ENCODE measurements at regions of chr17 and their contacts with region 1.

Region 1: GRCh38 chr17:48528153-48528935 is 2.5 kb downstream of the HOXB1 start:
- DNase-seq: no peak
- ATAC-seq: no peak
- H3K4me3 ChIP-seq: no peak overlapping the region
- H3K4me3 Mint-ChIP-seq: no peak overlapping the region
- H3K27ac ChIP-seq: no peak overlapping the region
- H3K27ac Mint-ChIP-seq: no peak overlapping the region
- H3K4me1 ChIP-seq: peaks cover 7% of the 10 kb centered on the region
- H3K4me1 Mint-ChIP-seq: peaks cover 6 to 12% of the 10 kb centered on the region in 2 donors
- H3K27me3 ChIP-seq: peaks cover 12% of the 10 kb centered on the region
- H3K27me3 Mint-ChIP-seq: peaks cover 25 to 40% of the 10 kb centered on the region in 2 donors
- CTCF ChIP-seq: no peak

Region 2: DNA sequence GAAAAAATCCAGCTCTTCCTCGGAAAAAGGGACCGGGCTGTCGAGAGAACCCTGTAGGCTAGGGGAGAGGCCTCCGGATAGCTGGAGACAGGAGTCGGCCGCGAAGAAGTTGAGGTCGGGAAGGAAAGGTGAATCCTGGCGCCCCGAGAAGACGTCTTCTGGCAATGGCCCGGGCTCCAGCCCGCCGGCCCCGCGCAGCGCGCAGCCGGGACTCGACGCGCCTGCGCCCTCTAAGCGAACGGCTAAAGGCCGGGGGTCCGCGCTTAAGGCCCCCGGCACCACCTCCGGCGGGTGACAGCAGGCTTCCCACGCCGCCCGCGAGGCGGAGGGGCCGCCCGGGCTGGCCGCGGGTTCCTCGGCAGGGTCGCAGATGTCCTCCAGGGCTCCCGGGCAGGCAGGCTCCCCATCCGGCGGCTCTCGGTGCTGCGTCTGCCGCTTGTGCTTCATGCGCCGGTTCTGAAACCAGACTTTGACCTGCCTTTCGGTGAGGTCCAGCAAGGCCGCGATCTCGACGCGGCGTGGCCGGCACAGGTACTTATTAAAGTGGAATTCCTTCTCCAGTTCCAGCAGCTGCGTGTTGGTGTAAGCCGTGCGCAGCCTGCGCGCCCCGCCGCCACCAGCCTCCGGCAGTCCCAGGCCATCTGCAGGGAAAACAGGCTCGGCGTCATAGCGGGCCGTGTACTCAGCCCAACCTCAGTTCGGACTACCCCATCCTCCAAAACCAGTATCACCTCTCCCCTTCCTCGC is 14.9 kb after region 1 on chr17:
- intact Hi-C with region 1: loop called (anchors 2 kb)
- DNase-seq: peak; percentile 64 to 77
- ATAC-seq: peak; percentile 63 to 74 (median 71)
- H3K4me3 ChIP-seq: peak overlapping the region; percentile 77
- H3K4me3 Mint-ChIP-seq: peak overlapping the region; percentile 99
- H3K27ac ChIP-seq: peak overlapping the region; percentile 95
- H3K27ac Mint-ChIP-seq: peak overlapping the region; percentile 94 to 99
- H3K4me1 ChIP-seq: peaks cover 57% of the 10 kb centered on the region
- H3K4me1 Mint-ChIP-seq: peaks cover 68 to 69% of the 10 kb centered on the region in 2 donors
- H3K27me3 ChIP-seq: no peaks in the 10 kb centered on the region
- H3K27me3 Mint-ChIP-seq: peaks cover 0 to 23% of the 10 kb centered on the region in 2 donors
- CTCF ChIP-seq: peak; percentile 36

Region 3: GRCh38 chr17:48555258-48556228 is 27.2 kb after region 1 on chr17:
- intact Hi-C with region 1: no loop called
- DNase-seq: peak in 1 of 2 donors; percentile 55
- ATAC-seq: peak; percentile 40 to 79 (median 76)
- H3K4me3 ChIP-seq: peak overlapping the region; percentile 17
- H3K4me3 Mint-ChIP-seq: peak overlapping the region; percentile 95
- H3K27ac ChIP-seq: no peak overlapping the region
- H3K27ac Mint-ChIP-seq: peak overlapping the region; percentile 87
- H3K4me1 ChIP-seq: peaks cover 13% of the 10 kb centered on the region
- H3K4me1 Mint-ChIP-seq: peaks cover 20 to 34% of the 10 kb centered on the region in 2 donors
- H3K27me3 ChIP-seq: no peaks in the 10 kb centered on the region
- H3K27me3 Mint-ChIP-seq: peaks cover 0 to 17% of the 10 kb centered on the region in 2 donors
- CTCF ChIP-seq: no peak

Region 4: DNA sequence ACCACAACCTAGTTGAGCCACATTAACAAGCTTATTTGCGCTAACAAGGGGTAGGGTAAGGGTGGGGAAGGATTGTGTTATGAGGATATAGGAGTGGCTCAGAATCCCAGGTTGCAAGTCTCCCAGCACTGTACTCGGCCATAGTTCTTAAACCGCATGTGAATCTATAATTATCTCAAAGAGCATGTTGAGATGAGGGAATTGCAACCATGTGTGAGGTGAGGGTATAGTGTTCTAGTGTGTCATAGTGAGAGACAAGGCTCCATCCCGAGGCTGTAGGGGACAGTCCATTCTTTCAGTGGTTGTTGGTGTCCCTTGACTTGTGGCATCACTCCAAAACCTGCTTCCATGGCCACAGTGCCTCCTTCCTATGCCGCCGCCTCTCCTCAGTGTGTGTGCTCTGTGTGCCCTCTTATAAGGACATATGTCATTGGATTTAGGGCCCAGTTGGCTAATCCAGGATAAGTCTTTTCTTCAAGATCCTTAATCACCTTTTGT is 341.5 kb after region 1 on chr17:
- intact Hi-C with region 1: no loop called
- DNase-seq: no peak
- ATAC-seq: no peak
- H3K4me3 ChIP-seq: no peak overlapping the region
- H3K4me3 Mint-ChIP-seq: no peak overlapping the region
- H3K27ac ChIP-seq: no peak overlapping the region
- H3K27ac Mint-ChIP-seq: no peak overlapping the region
- H3K4me1 ChIP-seq: no peaks in the 10 kb centered on the region
- H3K4me1 Mint-ChIP-seq: peaks cover 0 to 4% of the 10 kb centered on the region in 2 donors
- H3K27me3 ChIP-seq: no peaks in the 10 kb centered on the region
- H3K27me3 Mint-ChIP-seq: peaks cover 0 to under 1% of the 10 kb centered on the region in 2 donors
- CTCF ChIP-seq: no peak

Measured in natural killer cell (primary cell).